Heart right ventricle (tissue), 16 donors: ENCODE measurements at regions of chr5 and their contacts with region 1.

Region 1: DNA sequence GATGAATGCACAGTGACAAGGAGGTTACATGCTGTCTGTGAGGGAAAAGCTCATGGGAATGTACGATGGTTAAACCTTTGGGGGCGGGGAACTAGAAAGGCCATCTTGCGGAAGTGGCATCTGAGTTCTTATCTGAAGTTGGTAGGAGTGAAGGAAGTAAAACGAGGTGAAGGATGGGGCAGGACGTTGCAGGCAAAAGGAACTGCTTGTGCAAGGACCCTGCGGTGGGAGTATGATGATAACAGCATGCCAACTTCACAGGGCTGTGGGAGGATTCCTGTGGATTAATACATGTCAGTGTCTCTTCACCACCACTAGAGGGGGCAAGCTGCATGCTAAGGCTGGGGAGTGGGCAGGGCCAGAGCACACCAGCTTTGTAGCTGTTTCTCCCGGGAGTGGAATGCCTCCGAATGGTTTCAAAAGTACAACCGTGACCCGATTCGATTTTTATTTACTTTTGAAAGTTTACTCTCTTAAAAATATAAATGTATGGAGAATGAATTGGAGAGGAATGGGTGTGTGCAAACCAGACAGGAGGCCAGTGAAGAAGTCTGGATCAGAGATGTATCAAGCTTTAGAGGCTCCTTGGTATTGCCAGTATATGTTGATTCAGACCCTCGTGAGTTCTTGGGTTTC is 62.5 kb downstream of the CYFIP2 start:
- DNase-seq: peak; percentile 32 to 61
- ATAC-seq: peak; percentile 89 to 96 (median 94)
- H3K4me3 ChIP-seq: peak overlapping the region in 6 of 10 donors; percentile 8 to 37 (median 22)
- H3K27ac ChIP-seq: peak overlapping the region in 1 of 10 donors; percentile 36
- H3K4me1 ChIP-seq: peaks cover 0 to 11% (median 0%) of the 10 kb centered on the region in 9 donors
- H3K27me3 ChIP-seq: no peaks in the 10 kb centered on the region
- CTCF ChIP-seq: peak; percentile 87 to 95 (median 93)

Region 2: DNA sequence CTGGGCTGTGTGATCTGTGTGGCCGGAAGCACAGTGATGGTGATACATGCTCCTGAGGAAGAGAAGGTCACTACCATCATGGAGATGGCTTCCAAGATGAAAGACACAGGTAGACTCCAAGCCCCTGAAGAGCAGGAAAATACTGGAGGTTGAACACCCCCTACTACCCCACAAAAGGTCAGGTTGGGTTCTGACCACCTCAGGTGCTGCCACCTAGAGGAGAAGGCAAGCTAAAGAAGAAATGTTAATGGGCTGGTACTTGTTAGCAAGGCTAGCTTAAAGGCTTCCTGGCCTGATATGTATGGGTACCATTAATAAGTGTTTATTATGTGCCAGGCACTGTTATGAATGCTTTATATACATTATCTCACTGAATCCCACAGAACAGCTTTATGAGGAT is 143.3 kb after region 1 on chr5:
- intact Hi-C with region 1: loop called in 6 of 10 experiments (anchors 2 to 10 kb)
- DNase-seq: no peak
- ATAC-seq: no peak
- H3K4me3 ChIP-seq: no peak overlapping the region
- H3K27ac ChIP-seq: no peak overlapping the region
- H3K4me1 ChIP-seq: peaks cover 0 to 39% (median 16%) of the 10 kb centered on the region in 9 donors
- H3K27me3 ChIP-seq: no peaks in the 10 kb centered on the region
- CTCF ChIP-seq: peak in 8 of 9 donors; percentile 17 to 62 (median 53)

Region 3: DNA sequence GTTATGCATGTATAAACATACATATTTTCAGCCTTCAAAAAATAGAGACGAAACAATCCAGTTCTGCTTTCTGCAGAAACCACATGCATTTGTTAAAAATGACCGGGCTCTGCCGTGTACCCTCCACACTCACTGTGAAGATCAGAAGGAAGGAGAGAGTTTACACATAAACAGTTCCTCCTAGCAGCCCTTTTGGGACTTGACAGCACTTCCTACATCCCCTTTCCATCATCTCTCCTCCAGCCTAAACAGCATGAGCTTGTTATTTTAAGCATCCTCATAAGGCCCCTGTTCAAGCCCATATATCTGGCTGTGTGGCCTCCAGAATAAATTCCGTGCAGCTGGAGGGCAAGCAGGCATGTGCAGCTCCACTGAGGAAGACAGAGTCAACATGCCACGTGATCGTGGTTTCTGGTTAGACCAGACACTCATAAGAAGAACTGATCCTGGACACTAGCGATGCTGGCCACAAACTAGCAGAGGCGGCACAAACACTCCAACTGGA is 173.8 kb after region 1 on chr5:
- intact Hi-C with region 1: no loop called
- DNase-seq: no peak
- ATAC-seq: peak in 3 of 8 donors; percentile 22 to 53 (median 53)
- H3K4me3 ChIP-seq: no peak overlapping the region
- H3K27ac ChIP-seq: peak overlapping the region in 1 of 10 donors; percentile 4
- H3K4me1 ChIP-seq: peaks cover 0 to 36% (median 9%) of the 10 kb centered on the region in 9 donors
- H3K27me3 ChIP-seq: no peaks in the 10 kb centered on the region
- CTCF ChIP-seq: no peak

Region 4: DNA sequence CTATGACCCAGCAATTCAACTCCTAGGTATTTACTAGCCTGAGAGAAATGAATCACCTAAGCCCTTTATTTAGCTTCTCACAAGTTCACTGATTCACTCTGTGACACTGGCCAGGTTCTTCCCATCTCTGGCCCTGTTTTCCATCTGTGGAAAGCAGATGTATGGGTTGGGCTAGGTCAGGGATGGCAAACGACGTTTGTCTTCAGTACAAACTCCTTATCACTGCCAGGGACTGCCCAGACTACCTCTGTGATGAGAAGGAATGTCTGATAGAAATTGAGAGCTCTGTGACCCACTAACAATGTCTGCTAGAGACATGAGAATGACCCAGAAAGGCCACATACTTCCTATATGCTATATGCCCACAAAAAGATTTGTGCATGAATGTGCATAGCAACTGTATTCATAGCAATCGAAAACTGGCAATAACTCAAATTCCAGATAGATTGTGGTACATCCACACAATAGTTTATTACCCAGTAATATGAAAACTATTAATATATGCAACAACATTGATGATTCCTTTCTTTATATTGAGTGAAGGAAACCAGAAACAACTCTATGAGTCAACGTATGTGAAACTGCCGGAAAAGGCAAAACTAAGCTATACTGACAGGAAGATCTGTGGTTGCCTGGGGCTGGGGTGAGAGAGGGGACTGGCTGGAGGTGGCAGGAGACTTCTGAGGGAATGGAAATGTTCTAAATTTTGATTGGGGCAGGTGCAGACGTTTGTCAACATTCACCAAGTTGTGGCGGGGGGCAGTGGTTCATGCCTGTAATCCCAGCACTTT is 279.2 kb after region 1 on chr5:
- intact Hi-C with region 1: no loop called
- DNase-seq: no peak
- ATAC-seq: no peak
- H3K4me3 ChIP-seq: no peak overlapping the region
- H3K27ac ChIP-seq: peak overlapping the region in 1 of 10 donors; percentile 20
- H3K4me1 ChIP-seq: peaks cover 0 to 53% (median 0%) of the 10 kb centered on the region in 9 donors
- H3K27me3 ChIP-seq: no peaks in the 10 kb centered on the region
- CTCF ChIP-seq: no peak

Region 5: GRCh38 chr5:157743163-157744050 is 415.0 kb after region 1 on chr5 and contains the start of gene LSM11:
- intact Hi-C with region 1: loop called in 3 of 10 experiments (anchors 2 to 10 kb)
- DNase-seq: peak; percentile 85 to 89
- ATAC-seq: peak; percentile 90 to 97 (median 96)
- H3K4me3 ChIP-seq: peak within 1 kb of the TSS; percentile 68 to 97 (median 84)
- H3K27ac ChIP-seq: peak within 1 kb of the TSS in 8 of 10 donors; percentile 28 to 86 (median 48)
- H3K4me1 ChIP-seq: peaks cover 0 to 20% (median 12%) of the 10 kb centered on the region in 9 donors
- H3K27me3 ChIP-seq: no peaks in the 10 kb centered on the region
- CTCF ChIP-seq: peak; percentile 99 to 100 (median 100)
- total RNA-seq, gene LSM11: 0.98 to 2.2 (median 1.7) TPM